ENCODE measurements at regions of chr1 and their contacts with region 1.

Region 1: GRCh38 chr1:168834225-168834872 is 105.3 kb upstream of the DPT start:
- DNase-seq: peak in 1 of 2 experiments; percentile 52
- H3K4me3 ChIP-seq: no peak overlapping the region
- H3K4me3 Mint-ChIP-seq: peak overlapping the region; percentile 30
- H3K27ac Mint-ChIP-seq: peak overlapping the region; percentile 79
- H3K4me1 ChIP-seq: peaks cover 53% of the 10 kb centered on the region
- H3K4me1 Mint-ChIP-seq: peaks cover 45% of the 10 kb centered on the region
- H3K27me3 ChIP-seq: no peaks in the 10 kb centered on the region
- H3K27me3 Mint-ChIP-seq: no peaks in the 10 kb centered on the region
- CTCF ChIP-seq: no peak

Region 2: DNA sequence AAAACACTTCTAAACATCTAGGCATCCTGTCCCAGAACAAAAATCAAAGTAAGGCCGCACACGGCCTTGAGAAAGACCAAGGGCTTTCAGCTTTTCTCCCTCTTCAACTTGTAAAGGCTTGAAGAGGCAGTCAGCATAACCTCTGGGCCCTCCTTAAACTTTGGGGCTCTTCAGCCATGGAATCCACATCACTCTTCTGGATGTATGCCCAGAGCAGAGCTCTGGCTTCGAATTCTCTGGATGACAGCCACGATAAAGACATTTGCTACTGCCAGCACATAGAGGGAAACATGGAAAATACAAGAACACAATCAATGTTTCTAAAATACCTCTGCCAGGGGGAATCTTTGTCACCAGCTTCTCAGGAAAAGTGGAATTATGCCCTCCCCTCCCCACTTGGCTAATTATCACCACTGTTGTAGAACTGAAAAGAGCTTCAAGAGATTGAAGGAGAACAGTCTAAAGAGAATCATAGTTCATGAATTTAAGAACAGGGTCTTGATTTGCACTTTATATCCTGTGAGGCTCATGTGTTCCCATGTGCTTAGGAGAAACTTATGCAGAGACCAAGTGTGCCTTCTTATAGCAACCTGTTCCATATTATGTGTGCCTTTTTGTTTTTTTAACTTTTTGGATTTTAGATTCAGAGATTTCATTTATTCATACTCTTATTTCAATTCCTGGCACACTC is 66.3 kb before region 1 on chr1:
- CTCF ChIA-PET with region 1: no interaction called
- POLR2A ChIA-PET with region 1: no interaction called
- intact Hi-C with region 1: loop called (anchors 2 kb)
- DNase-seq: no peak
- H3K4me3 ChIP-seq: no peak overlapping the region
- H3K4me3 Mint-ChIP-seq: no peak overlapping the region
- H3K27ac Mint-ChIP-seq: no peak overlapping the region
- H3K4me1 ChIP-seq: peaks cover 15% of the 10 kb centered on the region
- H3K4me1 Mint-ChIP-seq: no peaks in the 10 kb centered on the region
- H3K27me3 ChIP-seq: no peaks in the 10 kb centered on the region
- H3K27me3 Mint-ChIP-seq: no peaks in the 10 kb centered on the region
- CTCF ChIP-seq: no peak

Region 3: DNA sequence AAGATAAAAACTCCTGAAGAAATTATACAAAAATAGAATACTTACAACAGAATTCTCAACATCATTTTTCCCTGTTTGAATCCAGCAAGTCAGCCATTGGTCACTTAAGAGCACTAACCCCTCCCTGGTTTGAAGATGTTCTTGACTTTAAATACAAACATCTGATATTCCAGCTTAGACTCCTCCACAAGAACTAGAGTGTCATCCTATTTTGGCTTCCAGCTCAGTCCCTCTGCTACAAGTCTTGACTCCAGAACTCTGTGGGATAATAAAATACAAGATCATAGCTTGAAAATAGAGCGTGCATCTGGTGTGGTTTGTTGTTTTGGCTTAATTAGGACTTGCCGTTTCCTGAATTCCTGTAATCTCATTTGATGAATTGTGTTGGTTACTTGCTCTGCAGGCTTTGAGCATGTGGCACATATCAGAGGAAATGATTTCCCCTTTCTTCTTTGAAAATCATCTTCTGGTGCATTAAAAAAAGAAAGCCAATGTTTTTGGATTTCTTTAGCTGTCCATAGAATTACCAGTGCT is 41.7 kb before region 1 on chr1:
- CTCF ChIA-PET with region 1: no interaction called
- POLR2A ChIA-PET with region 1: no interaction called
- intact Hi-C with region 1: loop called (anchors 1 kb)
- DNase-seq: no peak
- H3K4me3 ChIP-seq: no peak overlapping the region
- H3K4me3 Mint-ChIP-seq: no peak overlapping the region
- H3K27ac Mint-ChIP-seq: no peak overlapping the region
- H3K4me1 ChIP-seq: peaks cover 31% of the 10 kb centered on the region
- H3K4me1 Mint-ChIP-seq: peaks cover 45% of the 10 kb centered on the region
- H3K27me3 ChIP-seq: no peaks in the 10 kb centered on the region
- H3K27me3 Mint-ChIP-seq: no peaks in the 10 kb centered on the region
- CTCF ChIP-seq: no peak

Region 4: DNA sequence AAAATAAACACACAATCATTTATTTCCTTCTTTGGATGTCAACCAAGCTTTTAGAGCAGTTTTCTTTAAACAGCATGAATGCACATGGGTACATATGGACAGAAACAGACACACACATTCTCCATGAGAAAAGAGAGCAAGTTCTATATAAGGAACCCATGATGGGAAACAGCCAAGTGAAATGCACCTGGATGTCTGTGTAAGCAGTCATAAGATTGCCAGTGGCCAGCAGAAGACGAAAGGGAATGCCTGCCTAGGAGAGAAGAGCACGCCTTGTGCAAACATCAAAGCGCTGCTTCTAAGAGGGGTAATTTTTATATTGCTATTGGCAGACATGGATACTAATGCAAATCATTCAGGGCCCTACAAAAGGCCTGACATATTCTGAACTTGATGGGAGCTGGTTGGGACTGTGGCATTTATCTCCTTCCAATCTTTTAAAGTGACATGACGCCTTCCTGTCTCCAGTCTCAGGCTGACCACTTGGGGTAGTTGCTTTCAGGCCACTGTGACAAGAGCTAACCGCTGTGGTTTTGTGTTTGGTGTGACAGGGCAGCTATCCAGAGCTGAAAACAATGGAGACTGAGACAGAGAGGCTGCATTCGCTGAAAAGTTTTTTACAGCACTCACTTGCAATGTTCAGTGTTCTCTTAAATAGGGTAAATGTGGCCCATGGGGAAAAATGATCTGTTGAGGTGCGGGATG is 30.4 kb before region 1 on chr1:
- CTCF ChIA-PET with region 1: no interaction called
- POLR2A ChIA-PET with region 1: no interaction called
- intact Hi-C with region 1: loop called (anchors 2 kb)
- DNase-seq: no peak
- H3K4me3 ChIP-seq: no peak overlapping the region
- H3K4me3 Mint-ChIP-seq: peak overlapping the region; percentile 8
- H3K27ac Mint-ChIP-seq: peak overlapping the region; percentile 25
- H3K4me1 ChIP-seq: peaks cover 70% of the 10 kb centered on the region
- H3K4me1 Mint-ChIP-seq: peaks cover 47% of the 10 kb centered on the region
- H3K27me3 ChIP-seq: no peaks in the 10 kb centered on the region
- H3K27me3 Mint-ChIP-seq: no peaks in the 10 kb centered on the region
- CTCF ChIP-seq: no peak

Region 5: DNA sequence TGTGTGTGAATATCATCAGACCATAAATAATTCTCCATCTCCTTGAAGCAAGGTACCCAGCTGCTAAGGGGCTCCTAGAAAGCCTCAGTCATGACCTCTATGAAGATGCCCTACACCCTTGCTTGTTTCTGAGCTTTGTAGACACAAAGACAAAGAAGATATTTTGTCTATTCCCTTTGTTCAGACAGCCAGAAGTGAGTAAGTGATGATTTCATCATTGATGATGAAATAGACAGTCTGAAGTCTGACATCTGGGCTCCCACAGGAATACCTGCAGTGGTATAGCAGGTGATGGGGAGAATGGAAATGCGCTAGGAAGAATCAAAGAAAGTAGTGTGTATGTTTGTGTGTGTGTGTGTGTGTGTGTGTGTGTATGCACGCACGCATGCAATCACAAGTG is 23.2 kb before region 1 on chr1:
- CTCF ChIA-PET with region 1: no interaction called
- POLR2A ChIA-PET with region 1: no interaction called
- intact Hi-C with region 1: loop called (anchors 2 kb)
- DNase-seq: no peak
- H3K4me3 ChIP-seq: no peak overlapping the region
- H3K4me3 Mint-ChIP-seq: no peak overlapping the region
- H3K27ac Mint-ChIP-seq: peak overlapping the region; percentile 49
- H3K4me1 ChIP-seq: peaks cover 37% of the 10 kb centered on the region
- H3K4me1 Mint-ChIP-seq: peaks cover 28% of the 10 kb centered on the region
- H3K27me3 ChIP-seq: no peaks in the 10 kb centered on the region
- H3K27me3 Mint-ChIP-seq: no peaks in the 10 kb centered on the region
- CTCF ChIP-seq: no peak

Region 6: DNA sequence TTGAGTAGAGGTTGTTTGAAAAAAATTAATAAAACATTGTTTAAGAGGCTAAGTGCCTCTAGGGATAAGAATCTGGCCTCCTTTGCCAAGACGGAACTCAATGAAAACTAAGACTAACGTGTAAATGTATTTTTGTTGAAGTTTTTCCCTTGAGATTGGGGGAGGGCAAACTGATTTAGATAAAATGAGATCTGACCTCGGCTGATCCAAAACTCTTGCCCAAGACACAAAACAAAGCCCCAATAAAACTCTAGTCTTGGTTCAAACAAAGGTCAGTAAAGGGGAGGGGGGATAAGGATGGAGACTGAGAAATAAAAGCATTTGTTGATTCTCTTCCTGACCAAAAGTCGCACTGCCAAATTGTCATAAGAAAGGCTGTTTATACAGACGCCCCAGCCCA is 29.4 kb after region 1 on chr1:
- CTCF ChIA-PET with region 1: no interaction called
- POLR2A ChIA-PET with region 1: no interaction called
- intact Hi-C with region 1: loop called (anchors 1 kb)
- DNase-seq: no peak
- H3K4me3 ChIP-seq: no peak overlapping the region
- H3K4me3 Mint-ChIP-seq: no peak overlapping the region
- H3K27ac Mint-ChIP-seq: peak overlapping the region; percentile 48
- H3K4me1 ChIP-seq: peaks cover 25% of the 10 kb centered on the region
- H3K4me1 Mint-ChIP-seq: peaks cover 29% of the 10 kb centered on the region
- H3K27me3 ChIP-seq: no peaks in the 10 kb centered on the region
- H3K27me3 Mint-ChIP-seq: no peaks in the 10 kb centered on the region
- CTCF ChIP-seq: no peak

Region 7: GRCh38 chr1:168879916-168880734 is 45.8 kb after region 1 on chr1:
- CTCF ChIA-PET with region 1: no interaction called
- POLR2A ChIA-PET with region 1: no interaction called
- intact Hi-C with region 1: loop called (anchors 5 kb)
- DNase-seq: no peak
- H3K4me3 ChIP-seq: no peak overlapping the region
- H3K4me3 Mint-ChIP-seq: no peak overlapping the region
- H3K27ac Mint-ChIP-seq: no peak overlapping the region
- H3K4me1 ChIP-seq: peaks cover 24% of the 10 kb centered on the region
- H3K4me1 Mint-ChIP-seq: peaks cover 44% of the 10 kb centered on the region
- H3K27me3 ChIP-seq: no peaks in the 10 kb centered on the region
- H3K27me3 Mint-ChIP-seq: no peaks in the 10 kb centered on the region
- CTCF ChIP-seq: no peak